ENCODE measurements at regions of chrX and their contacts with region 1.

Region 1: DNA sequence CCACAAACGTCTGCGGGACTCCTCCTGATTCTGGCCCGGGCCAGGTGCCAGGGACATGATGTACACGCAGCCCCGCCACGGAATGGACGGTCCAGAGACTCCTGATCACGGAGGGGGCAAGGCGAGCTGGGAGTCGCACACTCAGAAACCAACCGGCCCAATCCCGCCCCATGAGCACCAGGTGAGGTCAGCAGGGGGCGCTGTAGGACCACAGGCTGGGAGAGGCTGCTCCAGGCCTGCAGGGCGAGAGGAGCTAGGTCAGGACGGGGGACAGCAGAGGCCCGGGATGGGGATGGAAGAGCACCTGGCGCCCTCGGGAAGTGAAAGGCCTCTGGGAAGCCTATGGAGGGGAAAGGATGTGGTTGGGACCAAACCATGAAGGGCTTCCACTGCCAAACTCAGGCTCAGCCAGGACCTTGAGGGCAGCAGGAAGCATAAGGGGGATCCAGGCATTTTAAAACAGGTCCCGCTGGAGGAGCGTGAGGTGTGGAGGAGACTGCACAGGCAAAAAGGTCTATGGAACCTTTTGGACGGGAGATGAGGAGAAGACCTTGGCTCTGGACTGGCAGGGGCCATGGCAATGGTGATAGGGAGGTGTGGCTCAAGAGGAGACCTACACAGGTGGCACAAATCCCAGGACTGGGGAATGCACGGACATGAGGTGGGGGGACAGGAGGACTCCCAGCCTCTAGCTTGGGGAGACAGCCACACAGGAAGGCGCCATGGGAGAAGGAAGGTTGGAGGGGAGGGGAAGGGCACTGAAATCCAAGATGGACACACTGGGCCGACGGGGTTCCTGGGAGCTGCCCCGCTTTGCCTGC is 79.2 kb downstream of the MTMR1 start:
- DNase-seq: peak; percentile 74 to 78
- ATAC-seq: peak; percentile 93 to 97
- H3K4me3 ChIP-seq: no peak overlapping the region
- H3K27ac ChIP-seq: peak overlapping the region; percentile 51 to 80
- H3K4me1 ChIP-seq: peaks cover 13% of the 10 kb centered on the region; the same call in 1 of the 3 replicates
- CTCF ChIP-seq: peak; percentile 74
- EP300 ChIP-seq: no peak
- POLR2A ChIP-seq: no peak
- RAD21 ChIP-seq: peak; percentile 95 to 97

Region 2: DNA sequence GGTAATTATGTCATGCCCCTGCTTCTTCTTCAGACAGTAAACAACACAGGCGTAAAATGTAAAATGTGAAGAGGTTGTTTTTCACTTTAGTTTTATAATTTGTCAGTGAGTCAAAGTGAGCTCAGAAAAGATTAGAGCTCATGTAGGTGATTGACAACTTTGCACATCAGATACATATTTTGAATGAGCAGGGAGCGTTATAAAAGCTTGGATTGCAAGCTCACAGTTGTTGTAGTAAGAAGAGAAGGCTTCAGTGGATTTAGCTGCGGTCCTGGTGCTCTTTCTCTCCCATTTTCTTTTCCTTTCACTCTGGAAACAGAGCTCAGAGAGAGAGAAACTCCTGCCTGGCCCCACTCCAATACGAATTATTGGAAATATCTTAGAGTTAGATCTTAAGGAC is 52.7 kb before region 1 on chrX:
- CTCF ChIA-PET with region 1: no interaction called
- POLR2A ChIA-PET with region 1: no interaction called
- DNase-seq: no peak
- ATAC-seq: no peak
- H3K4me3 ChIP-seq: no peak overlapping the region
- H3K27ac ChIP-seq: no peak overlapping the region
- H3K4me1 ChIP-seq: 0 out of 3 replicates have a peak, but pooled peaks cover 6% of the 10 kb centered on the region
- CTCF ChIP-seq: no peak
- EP300 ChIP-seq: no peak
- POLR2A ChIP-seq: no peak
- RAD21 ChIP-seq: no peak

Region 3: DNA sequence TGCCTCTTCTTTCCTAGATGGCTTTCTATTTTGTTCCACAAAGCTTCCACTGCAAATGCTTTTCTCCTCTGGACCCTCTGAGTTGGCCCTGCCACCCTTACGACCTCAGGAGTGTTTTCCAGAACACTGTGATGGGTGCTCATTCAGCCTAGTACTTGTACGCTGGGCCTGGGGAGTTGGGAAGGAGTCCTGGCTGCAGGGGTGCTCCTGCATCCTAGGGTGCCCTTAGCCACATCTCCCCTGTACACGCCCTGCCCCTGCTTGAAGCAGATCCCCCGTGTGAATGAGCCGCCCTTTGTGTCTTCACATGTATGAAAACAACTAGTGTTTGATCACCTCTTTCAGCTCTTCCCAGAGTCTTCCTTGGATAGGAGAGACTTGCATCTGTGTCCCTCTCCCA is 15.0 kb before region 1 on chrX:
- CTCF ChIA-PET with region 1: interaction called, 36 read pairs
- POLR2A ChIA-PET with region 1: no interaction called
- DNase-seq: no peak
- ATAC-seq: no peak
- H3K4me3 ChIP-seq: no peak overlapping the region
- H3K27ac ChIP-seq: no peak overlapping the region
- H3K4me1 ChIP-seq: no peaks in the 10 kb centered on the region
- CTCF ChIP-seq: no peak
- EP300 ChIP-seq: no peak
- POLR2A ChIP-seq: no peak
- RAD21 ChIP-seq: no peak

Region 4: DNA sequence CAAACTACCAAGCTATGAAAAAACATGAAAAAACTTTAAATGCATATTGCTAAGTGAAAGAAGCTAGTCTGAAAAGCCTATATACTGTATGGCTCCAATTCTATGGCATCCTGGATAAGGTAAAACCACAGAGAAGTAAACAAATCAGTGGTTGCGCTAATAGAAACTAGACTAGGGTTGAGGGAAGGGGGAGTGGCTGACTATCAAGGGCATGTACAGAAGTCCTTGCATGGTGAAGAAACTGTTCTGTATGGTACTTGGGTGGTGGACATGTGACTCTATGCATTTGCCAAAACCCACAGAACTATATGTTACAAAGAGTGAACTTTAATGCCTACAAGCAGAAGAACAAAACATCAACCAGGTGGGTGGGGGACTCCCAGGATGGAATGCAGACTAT is 17.7 kb after region 1 on chrX:
- CTCF ChIA-PET with region 1: interaction called, 10 read pairs
- POLR2A ChIA-PET with region 1: no interaction called
- DNase-seq: no peak
- ATAC-seq: no peak
- H3K4me3 ChIP-seq: no peak overlapping the region
- H3K27ac ChIP-seq: no peak overlapping the region
- H3K4me1 ChIP-seq: no peaks in the 10 kb centered on the region
- CTCF ChIP-seq: no peak
- EP300 ChIP-seq: no peak
- POLR2A ChIP-seq: no peak
- RAD21 ChIP-seq: no peak

Region 5: DNA sequence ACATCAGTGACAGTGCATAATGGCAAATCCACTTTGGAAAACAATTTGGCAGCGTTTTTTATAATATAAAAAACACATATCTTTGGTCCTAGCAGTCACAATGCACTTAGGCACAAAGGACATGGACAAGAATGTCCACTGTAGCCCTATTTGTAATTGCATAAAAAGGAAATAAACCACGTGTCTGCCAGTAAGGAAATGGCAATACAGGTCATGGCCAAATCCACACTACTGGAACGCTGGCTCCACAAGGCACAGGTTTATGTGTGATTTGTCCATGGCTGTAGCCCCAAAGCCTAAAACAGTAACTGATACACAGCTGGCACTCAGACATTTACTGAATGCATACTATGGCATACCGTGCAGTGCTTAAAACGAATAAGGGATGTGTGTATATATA is 56.4 kb after region 1 on chrX:
- CTCF ChIA-PET with region 1: no interaction called
- POLR2A ChIA-PET with region 1: no interaction called
- DNase-seq: no peak
- ATAC-seq: no peak
- H3K4me3 ChIP-seq: no peak overlapping the region
- H3K27ac ChIP-seq: no peak overlapping the region
- H3K4me1 ChIP-seq: no peaks in the 10 kb centered on the region
- CTCF ChIP-seq: no peak
- EP300 ChIP-seq: no peak
- POLR2A ChIP-seq: no peak
- RAD21 ChIP-seq: no peak

Region 6: DNA sequence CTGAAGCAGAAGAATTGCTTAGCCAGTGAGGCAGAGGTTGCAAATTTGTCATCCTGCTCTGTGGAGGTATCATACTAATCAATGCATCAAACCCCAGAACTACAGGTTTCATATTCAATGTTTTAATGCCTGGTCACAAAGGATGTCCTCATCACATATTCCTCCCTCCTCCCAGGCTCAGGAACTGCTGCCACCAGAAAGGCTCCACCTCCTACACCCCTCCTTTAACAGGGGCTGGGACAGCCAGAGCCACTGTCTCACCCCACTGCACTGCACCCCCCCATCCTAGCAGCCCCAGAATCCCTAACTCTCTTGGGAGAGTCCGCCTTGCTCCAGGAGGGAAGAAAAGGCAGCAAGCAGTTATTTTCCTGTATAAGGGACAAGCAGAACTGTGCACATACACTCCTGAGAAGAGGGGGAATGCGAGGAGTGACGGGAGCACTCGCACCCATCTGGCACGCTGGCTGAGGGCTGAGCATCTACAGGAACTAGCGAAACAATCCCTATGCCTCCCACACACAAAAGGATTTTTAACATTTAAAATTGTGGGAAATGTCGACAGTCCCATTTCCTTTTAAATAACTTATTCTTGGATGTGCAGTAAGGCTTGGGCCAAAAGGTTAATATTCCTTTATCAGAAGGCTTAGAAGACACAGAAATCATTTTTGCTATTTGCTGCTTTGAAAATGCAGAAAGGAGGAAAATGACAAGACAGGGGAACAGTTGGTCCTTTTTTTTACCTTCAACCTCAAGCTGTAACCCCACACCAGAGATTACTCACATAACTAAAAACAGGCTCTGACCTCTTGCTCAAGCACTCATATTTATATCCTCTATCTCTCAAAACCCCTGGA is 98.4 kb after region 1 on chrX:
- CTCF ChIA-PET with region 1: no interaction called
- POLR2A ChIA-PET with region 1: no interaction called
- DNase-seq: no peak
- ATAC-seq: no peak
- H3K4me3 ChIP-seq: no peak overlapping the region
- H3K27ac ChIP-seq: peak overlapping the region; percentile 41 to 69; a peak in 5 of 6 replicates
- H3K4me1 ChIP-seq: peaks cover 43% of the 10 kb centered on the region
- CTCF ChIP-seq: no peak
- EP300 ChIP-seq: no peak
- POLR2A ChIP-seq: no peak
- RAD21 ChIP-seq: no peak

Region 7: GRCh38 chrX:150982788-150983520 is 210.6 kb after region 1 on chrX and contains the start of gene HMGB3:
- CTCF ChIA-PET with region 1: interaction called, 12 read pairs
- POLR2A ChIA-PET with region 1: interaction called, 9 read pairs
- DNase-seq: peak; percentile 94 to 96
- ATAC-seq: peak; percentile 98 to 100
- H3K4me3 ChIP-seq: peak within 1 kb of the TSS; percentile 99
- H3K27ac ChIP-seq: peak within 1 kb of the TSS; percentile 96
- H3K4me1 ChIP-seq: 0 out of 3 replicates have a peak, but pooled peaks cover 12% of the 10 kb centered on the region
- CTCF ChIP-seq: no peak
- EP300 ChIP-seq: no peak
- POLR2A ChIP-seq: peak; percentile 65
- RAD21 ChIP-seq: no peak; a peak in 1 of 5 replicates
- polyA plus RNA-seq, gene HMGB3: 110 and 142 TPM in 2 replicates

Region 8: DNA sequence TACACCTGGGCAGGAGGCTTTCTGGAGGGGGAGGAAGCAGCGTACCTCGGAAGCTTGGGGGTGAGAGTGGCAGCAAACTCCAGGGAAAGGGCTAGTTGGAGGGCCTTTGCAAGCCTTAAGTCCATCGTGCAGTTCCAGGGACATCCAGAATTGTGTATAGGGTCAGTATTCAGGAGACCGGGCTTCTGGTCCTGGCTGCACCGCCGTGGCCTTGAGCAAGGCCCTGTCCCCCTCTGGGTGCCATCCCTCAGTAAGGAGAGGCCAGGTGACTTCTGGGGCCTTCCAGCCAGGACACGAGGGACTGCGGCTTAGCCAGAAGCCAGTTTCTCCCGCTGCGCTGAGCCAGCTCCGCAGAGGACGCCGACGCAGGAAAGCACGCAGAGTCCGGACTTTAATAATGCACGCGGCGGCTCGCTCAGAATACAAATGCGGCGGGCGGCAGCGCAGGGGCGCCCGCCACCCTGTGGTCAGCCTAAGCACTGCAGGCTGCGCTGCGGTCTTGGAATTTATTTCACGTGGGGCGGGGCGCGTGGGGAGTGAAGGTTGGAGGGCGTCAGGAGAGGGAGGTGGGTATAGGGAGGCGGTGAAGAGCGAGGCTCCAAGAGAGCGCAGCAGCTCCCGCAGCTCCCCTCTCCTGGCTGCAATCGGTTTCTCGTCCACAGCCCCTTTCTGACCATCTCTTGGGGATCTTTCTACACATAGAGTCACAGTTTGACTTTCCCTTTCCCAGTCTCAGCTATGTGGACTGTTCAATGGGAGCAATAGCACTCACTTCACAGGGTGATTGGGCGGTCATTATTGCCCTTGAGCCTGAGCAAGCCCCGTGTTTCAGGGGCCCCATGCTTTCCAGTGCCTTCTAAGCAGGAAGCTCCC is 310.0 kb after region 1 on chrX:
- CTCF ChIA-PET with region 1: interaction called, 223 read pairs
- POLR2A ChIA-PET with region 1: interaction called, 7 read pairs
- DNase-seq: peak; percentile 51 to 56
- ATAC-seq: peak; percentile 91 to 96
- H3K4me3 ChIP-seq: peak overlapping the region; percentile 31; the same call in 2 of the 3 replicates
- H3K27ac ChIP-seq: peak overlapping the region; percentile 69 to 84; a peak in 5 of 6 replicates
- H3K4me1 ChIP-seq: 0 out of 3 replicates have a peak, but pooled peaks cover 4% of the 10 kb centered on the region
- CTCF ChIP-seq: peak; percentile 73
- EP300 ChIP-seq: no peak
- POLR2A ChIP-seq: no peak
- RAD21 ChIP-seq: peak; percentile 80 to 90

Region 9: GRCh38 chrX:151604931-151605330 is 832.6 kb after region 1 on chrX:
- CTCF ChIA-PET with region 1: no interaction called
- POLR2A ChIA-PET with region 1: no interaction called
- DNase-seq: no peak
- ATAC-seq: no peak
- H3K4me3 ChIP-seq: no peak overlapping the region
- H3K27ac ChIP-seq: no peak overlapping the region
- H3K4me1 ChIP-seq: no peaks in the 10 kb centered on the region
- CTCF ChIP-seq: no peak
- EP300 ChIP-seq: no peak
- POLR2A ChIP-seq: no peak
- RAD21 ChIP-seq: no peak